PC-3 (cell line): ENCODE measurements at regions of chr10 and their contacts with region 1.

Region 1: GRCh38 chr10:91643700-91644099 is 10.8 kb upstream of the PPP1R3C start:
- DNase-seq: peak; percentile 63
- ATAC-seq: peak; percentile 85
- H3K4me3 ChIP-seq: no peak overlapping the region
- H3K27ac ChIP-seq: no peak overlapping the region
- H3K4me1 ChIP-seq: peaks cover 9% of the 10 kb centered on the region
- H3K27me3 ChIP-seq: no peaks in the 10 kb centered on the region
- CTCF ChIP-seq: peak; percentile 61

Region 2: GRCh38 chr10:91665842-91666241 is 22.1 kb after region 1 on chr10:
- CTCF ChIA-PET with region 1: no interaction called
- POLR2A ChIA-PET with region 1: no interaction called
- intact Hi-C with region 1: no loop called
- DNase-seq: no peak
- ATAC-seq: no peak
- H3K4me3 ChIP-seq: no peak overlapping the region
- H3K27ac ChIP-seq: no peak overlapping the region
- H3K4me1 ChIP-seq: no peaks in the 10 kb centered on the region
- H3K27me3 ChIP-seq: no peaks in the 10 kb centered on the region
- CTCF ChIP-seq: no peak

Region 3: GRCh38 chr10:91694170-91694794 is 50.6 kb after region 1 on chr10:
- CTCF ChIA-PET with region 1: interaction called, 8 read pairs
- POLR2A ChIA-PET with region 1: no interaction called
- intact Hi-C with region 1: loop called (anchors 1 kb)
- DNase-seq: peak; percentile 71
- ATAC-seq: peak; percentile 37; the same call in 1 of the 2 replicates
- H3K4me3 ChIP-seq: no peak overlapping the region
- H3K27ac ChIP-seq: no peak overlapping the region
- H3K4me1 ChIP-seq: 0 out of 2 replicates have a peak, but pooled peaks cover 3% of the 10 kb centered on the region
- H3K27me3 ChIP-seq: no peaks in the 10 kb centered on the region
- CTCF ChIP-seq: peak; percentile 85

Region 4: DNA sequence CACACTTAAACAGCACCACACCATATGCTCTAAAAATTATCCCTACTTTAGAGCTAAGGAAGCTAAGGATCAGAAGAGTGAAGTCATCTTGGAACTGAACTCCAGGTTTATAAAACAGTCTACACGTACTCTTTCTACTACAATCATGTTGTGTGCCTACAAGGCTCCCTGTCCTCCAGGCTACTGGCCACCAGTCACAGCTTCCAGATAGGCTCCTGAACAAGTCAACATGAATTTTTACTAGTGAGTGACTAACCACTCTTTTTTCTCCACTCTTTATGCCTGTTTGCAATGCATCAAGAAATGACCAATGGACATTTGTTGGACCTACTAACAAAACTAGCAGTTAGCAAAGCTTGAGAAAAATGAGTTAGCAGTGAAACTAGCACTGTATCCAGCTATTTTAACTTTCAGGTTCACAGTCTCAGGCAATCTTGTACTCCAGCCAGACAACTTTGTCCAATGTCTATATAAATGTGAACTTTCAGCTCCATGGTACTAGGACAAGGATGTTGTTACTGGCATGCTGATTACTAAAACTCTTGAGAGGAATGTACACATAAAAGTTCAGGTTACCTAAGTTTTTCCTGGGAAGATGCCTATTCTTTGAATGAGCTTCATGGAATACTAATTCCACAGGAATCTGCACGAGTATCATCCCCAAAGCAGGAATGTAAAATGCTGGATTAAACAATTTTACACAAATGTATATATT is 459.8 kb after region 1 on chr10:
- CTCF ChIA-PET with region 1: no interaction called
- POLR2A ChIA-PET with region 1: no interaction called
- intact Hi-C with region 1: no loop called
- DNase-seq: peak; percentile 48
- ATAC-seq: peak; percentile 49
- H3K4me3 ChIP-seq: no peak overlapping the region
- H3K27ac ChIP-seq: no peak overlapping the region
- H3K4me1 ChIP-seq: peaks cover 31% of the 10 kb centered on the region
- H3K27me3 ChIP-seq: no peaks in the 10 kb centered on the region
- CTCF ChIP-seq: no peak